ENCODE measurements at regions of chr11 and their contacts with region 1.

Region 1: DNA sequence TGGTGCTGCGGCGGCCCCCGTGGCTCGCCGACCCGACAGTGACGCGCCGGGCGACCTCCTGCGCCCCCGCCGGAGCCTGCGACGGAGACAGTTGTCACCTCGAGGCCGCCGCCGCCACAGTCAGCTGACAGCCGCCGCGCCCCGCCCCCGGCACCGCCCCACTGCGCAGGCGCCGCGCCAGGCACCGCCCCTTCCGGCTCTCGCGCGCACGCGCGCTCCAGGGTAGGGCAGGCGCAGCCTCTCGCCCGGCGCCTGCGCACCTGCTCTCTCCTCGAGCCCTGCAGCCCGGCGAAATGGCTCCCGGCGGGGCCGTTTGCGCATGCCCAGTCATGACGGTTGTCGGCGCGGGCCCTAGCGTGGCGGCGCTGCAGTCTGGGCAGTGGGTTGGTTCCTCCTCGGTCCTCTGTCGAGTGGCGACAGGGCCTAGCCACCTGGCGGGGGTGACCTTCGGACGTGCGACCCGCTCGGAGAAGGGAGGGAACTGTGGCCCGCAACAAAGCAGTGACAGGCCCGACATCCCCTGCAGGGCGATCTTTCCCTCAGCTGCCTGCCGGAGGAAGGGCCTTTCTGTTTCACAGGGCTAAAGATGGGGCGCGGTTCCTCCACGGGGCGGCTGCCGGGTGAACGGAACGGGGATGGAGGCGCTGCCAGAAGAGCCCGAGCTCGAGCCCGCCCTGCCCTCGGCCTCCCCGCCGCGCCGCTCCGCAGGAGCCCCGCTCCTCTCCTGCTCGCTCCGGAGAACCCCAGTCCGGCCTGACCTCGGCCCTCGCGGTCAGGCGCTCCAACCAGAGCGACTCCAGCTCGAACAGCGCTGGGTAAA is at the start of gene TOLLIP:
- DNase-seq: peak; percentile 91
- H3K4me3 Mint-ChIP-seq: peak within 1 kb of the TSS; percentile 74
- H3K27ac Mint-ChIP-seq: peak within 1 kb of the TSS; percentile 87
- H3K4me1 Mint-ChIP-seq: peaks cover 8% of the 10 kb centered on the region
- H3K27me3 Mint-ChIP-seq: no peaks in the 10 kb centered on the region
- CTCF ChIP-seq: no peak
- total RNA-seq, gene TOLLIP: 58.5 and 58.8 TPM in 2 replicates

Region 2: DNA sequence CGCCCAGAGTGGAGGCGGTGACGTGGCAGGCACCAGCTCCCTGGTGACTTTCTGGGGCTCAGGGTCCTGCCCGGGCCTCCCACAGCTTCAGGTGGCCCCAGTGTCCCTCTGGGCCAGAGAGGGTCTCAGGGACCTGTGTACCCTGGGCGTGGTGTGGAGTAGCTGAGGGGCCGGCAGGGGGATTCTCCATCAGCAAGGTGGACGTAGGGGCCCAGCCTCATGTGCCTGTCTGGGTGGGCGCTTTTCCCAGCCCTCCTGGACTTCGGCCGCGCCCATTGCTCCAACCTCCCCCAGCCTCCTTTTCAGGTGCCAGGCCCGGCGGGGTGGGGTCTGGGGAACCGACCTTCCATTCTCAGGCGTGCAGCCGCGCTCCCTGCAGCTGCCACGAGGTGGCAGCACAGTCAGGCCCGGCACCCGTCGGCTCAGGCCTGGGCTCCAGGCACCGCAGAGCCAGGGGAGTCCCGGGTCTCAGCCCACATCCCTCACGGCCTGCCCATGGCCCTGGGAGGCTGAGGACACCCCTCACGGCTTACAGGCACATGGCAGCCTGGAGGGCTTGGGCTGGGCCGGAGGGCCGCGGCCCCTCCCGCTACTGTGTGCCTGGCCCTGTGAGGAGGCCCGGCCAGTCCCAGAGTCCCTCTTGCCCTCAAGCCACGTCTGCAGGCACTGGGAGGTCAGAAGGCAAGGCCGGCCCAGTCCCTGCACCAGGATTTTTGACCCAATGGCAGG is 106.8 kb before region 1 on chr11:
- CTCF ChIA-PET with region 1: no interaction called
- POLR2A ChIA-PET with region 1: interaction called, 5 read pairs
- intact Hi-C with region 1: loop called (anchors 5 kb)
- DNase-seq: peak; percentile 59
- H3K4me3 Mint-ChIP-seq: no peak overlapping the region
- H3K27ac Mint-ChIP-seq: no peak overlapping the region
- H3K4me1 Mint-ChIP-seq: no peaks in the 10 kb centered on the region
- H3K27me3 Mint-ChIP-seq: no peaks in the 10 kb centered on the region
- CTCF ChIP-seq: peak; percentile 87

Region 3: DNA sequence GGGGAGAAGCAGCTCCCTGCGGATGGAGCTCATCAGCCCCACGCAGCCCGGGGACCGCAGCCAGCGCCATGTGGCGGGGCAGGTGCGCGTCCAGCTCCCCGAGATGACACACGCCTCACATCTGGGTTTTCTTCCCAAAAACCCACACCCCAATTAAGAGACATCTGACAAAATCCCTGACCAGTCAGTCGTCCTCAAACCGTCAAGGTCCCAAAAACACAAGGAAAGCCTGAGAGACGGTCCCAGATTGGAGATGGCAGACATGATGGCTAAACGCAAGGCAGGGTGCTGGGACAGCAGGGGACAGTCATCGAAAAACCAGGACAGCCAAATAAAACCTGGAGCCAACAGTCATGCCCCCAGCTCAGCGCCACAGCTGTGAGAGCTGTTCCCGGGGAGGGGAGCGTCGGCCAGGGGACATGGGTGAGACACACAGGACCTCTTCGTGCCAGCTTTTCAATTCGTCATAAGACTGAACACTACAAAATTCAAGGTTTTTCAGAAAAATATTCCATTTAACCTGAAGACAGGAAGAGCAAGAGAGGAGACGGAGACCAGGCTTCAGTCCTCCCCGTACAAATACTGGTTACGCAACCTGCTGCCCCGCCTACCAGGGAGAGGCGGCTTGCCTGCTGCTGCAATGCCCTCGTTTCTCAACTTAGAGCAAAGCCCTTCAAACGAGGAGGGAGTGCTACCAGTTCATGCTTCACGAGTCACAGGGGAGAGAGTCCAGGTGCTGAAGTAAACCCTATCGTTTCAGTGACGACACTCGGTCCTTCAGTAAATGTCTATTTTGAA is 10.8 kb before region 1 on chr11:
- CTCF ChIA-PET with region 1: interaction called, 4 read pairs
- POLR2A ChIA-PET with region 1: interaction called, 14 read pairs
- intact Hi-C with region 1: no loop called
- DNase-seq: peak; percentile 89
- H3K4me3 Mint-ChIP-seq: peak overlapping the region; percentile 56
- H3K27ac Mint-ChIP-seq: peak overlapping the region; percentile 66
- H3K4me1 Mint-ChIP-seq: peaks cover 7% of the 10 kb centered on the region
- H3K27me3 Mint-ChIP-seq: no peaks in the 10 kb centered on the region
- CTCF ChIP-seq: no peak

Region 4: DNA sequence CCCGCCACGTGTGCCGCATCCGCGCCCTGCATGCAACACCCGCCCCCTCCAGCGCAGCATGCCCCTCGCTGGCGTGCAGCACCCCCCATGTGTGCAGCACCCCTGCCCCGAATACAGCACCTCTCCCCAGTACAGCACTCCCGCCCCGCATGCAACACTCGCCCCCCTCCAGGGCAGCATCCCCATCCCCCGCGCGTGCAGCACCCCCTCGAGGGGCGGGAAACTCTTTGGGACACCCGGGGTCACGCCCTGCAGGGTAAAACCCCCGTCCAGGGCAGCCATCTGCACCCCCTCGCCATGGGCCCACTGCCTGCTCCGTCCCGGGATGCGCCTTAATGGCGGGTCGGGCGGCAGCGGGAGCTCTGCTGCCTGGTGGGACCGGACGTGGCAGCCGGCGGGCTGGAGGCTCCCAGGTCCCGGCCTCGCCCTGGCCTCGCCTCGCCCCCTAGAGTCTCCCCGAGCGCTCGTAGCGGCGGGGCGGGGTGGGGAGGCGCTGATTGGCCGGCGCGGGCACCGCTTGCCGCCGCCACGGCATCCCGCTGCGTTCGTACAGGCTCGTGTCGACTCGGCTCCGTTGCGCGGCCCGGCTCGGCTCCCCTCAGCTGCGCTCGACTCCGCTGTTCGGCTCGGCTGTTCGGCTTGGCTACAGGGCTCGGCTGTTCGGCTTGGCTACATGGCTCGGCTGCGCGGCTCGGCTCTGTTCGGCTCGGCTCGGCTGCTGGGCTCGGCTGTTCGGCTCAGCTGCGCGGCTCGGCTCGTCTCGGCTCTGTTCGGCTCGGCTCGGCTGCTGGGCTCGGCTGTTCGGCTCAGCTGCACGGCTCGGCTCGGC is 79.6 kb after region 1 on chr11:
- CTCF ChIA-PET with region 1: no interaction called
- POLR2A ChIA-PET with region 1: interaction called, 3 read pairs
- intact Hi-C with region 1: loop called (anchors 10 kb)
- DNase-seq: peak; percentile 90
- H3K4me3 Mint-ChIP-seq: peak overlapping the region; percentile 14
- H3K27ac Mint-ChIP-seq: no peak overlapping the region
- H3K4me1 Mint-ChIP-seq: no peaks in the 10 kb centered on the region
- H3K27me3 Mint-ChIP-seq: no peaks in the 10 kb centered on the region
- CTCF ChIP-seq: no peak